ENCODE measurements at regions of chr16 and their contacts with region 1.

Region 1: DNA sequence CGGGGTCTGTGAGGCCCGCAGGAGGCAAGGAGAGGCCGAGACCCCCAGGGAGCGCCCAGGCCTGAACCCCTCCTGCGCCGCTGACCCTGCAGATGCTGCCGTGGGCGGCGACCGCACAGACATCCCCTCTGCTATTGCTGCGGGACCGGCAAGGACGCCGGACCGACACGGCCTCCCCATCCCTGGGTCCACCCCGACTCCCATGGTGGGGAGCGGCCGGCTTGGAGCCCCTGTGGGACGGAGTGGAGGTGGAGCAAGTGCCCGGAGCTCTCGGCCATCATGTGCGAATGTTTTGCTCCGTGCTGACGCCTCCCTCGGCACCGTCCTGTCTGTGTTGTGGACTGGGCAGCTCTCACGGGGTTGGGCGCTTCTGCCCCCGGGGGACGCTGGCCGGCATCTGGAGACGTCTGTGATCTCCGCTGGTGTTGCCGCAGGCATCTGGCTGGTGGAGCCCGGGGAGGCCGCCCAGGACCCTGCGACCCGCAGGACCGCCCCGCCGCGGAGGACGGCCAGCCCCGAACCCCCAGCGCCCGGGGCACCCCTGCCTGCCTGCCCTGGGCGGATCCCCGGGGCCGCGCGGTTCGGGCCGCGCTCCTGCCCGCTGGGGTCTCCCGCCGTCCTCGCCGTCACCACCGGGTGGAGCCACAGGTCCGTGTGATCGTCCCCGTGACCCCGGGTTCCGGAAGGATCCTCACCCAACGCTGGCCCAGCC is 12.8 kb upstream of the GNG13 start:
- DNase-seq: peak; percentile 78
- ATAC-seq: peak; percentile 84

Region 2: DNA sequence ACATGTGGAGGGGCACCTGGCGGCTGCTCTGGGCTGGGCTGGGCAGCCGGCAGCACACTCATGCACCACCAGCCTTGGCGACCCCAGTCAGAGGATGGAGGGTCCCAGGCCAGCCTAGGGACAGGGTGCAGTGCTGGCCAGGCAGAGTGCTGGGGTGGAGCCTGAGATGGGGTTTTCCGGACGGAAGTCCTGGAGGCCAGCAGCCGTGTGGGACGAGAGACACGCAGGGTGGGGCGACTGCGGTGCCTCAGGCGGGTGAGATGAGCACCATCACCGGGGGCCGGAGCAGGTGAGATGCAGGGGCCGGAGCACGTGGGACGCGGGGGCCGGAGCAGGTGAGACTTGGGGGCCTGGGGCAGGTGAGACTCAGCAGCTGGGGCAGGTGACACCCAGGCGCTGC is 102.2 kb after region 1 on chr16:
- intact Hi-C with region 1: loop called (anchors 1 kb)
- DNase-seq: no peak
- ATAC-seq: no peak

Region 3: GRCh38 chr16:1054660-1055556 is 241.5 kb after region 1 on chr16:
- intact Hi-C with region 1: loop called (anchors 5 kb)
- DNase-seq: peak; percentile 84
- ATAC-seq: peak; percentile 88